ENCODE measurements at regions of chr17 and their contacts with region 1.

Region 1: DNA sequence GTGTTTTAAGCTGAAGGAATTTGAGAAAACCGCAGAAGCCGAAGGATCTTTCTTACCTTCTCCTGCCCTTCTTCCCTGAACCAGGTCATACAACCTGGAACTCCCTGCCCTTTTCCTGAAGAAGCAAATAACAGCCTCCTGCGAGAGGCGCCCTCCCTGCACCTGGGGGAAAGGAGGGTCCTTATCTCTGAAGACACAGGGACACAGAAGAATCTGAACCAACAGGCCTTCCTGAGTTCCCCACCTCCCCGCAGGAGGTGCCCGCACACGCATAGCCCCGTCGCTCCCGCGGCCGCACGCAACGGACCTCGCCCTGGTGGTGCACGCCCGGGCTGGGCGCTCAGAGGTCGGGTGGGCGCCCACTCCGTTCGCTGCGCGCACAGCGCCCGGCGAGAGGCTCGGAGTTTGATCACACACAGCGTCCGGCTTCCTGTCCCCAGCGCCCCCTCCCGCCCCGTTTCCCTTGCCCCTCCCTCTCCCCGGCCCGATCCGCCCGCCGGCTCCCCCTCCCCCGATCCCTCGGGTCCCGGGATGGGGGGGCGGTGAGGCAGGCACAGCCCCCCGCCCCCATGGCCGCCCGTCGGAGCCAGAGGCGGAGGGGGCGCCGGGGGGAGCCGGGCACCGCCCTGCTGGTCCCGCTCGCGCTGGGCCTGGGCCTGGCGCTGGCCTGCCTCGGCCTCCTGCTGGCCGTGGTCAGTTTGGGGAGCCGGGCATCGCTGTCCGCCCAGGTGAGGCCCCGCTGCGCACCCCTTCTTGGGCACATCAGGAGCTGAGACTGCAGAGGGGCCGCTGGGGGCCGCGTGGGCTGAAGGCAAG is at the start of gene TNFSF12:
- DNase-seq: peak; percentile 36 to 66 (median 59)
- H3K4me3 ChIP-seq: peak within 1 kb of the TSS; percentile 50 to 96 (median 79)
- H3K27ac ChIP-seq: peak within 1 kb of the TSS; percentile 62 to 98 (median 94)
- H3K27me3 ChIP-seq: no peaks in the 10 kb centered on the region
- CTCF ChIP-seq: peak in 18 of 56 donors; percentile 5 to 38 (median 16)
- total RNA-seq, gene TNFSF12: 25.3 to 97.2 (median 50.2) TPM

Region 2: DNA sequence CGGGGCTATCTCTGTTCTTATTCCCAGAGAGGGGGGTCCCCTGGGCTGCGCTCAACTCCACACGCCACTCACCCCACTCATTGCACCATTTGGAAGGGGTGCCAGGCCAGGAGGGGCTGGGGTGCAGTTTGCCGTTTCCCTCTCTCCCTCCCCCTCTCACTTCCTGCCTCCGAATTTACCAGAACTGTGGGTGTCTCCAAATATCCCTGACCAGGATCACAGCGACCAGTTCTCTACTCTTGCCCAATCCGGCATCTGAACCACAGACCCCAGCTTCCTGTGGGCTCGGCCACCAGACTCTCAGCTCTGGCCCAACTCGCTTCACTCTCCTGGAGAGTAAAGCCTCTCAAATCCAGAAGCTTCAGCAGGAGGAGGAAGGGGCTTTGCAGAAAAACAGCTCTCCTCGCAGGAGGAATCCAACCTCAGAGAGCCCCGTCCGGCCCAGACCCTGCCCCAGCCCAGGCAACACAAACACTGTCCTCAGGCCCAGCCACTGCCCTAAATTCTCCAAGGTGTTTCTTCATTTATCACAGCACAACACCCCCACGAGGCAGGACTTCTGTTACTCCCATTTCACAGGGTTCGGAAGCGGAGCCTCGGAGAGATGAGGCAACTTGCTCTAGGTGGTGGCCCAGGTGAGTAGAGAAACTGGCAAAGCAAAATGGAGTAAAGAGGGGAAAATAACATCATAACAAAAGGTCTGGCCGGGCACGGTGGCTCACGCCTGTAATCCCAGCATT is 433.7 kb before region 1 on chr17:
- intact Hi-C with region 1: no loop called
- DNase-seq: peak in 3 of 10 donors; percentile 31 to 44 (median 40)
- H3K4me3 ChIP-seq: no peak overlapping the region
- H3K27ac ChIP-seq: peak overlapping the region in 10 of 59 donors; percentile 4 to 65 (median 27)
- H3K27me3 ChIP-seq: peaks cover 0 to 6% (median 0%) of the 10 kb centered on the region in 45 donors
- CTCF ChIP-seq: no peak

Region 3: DNA sequence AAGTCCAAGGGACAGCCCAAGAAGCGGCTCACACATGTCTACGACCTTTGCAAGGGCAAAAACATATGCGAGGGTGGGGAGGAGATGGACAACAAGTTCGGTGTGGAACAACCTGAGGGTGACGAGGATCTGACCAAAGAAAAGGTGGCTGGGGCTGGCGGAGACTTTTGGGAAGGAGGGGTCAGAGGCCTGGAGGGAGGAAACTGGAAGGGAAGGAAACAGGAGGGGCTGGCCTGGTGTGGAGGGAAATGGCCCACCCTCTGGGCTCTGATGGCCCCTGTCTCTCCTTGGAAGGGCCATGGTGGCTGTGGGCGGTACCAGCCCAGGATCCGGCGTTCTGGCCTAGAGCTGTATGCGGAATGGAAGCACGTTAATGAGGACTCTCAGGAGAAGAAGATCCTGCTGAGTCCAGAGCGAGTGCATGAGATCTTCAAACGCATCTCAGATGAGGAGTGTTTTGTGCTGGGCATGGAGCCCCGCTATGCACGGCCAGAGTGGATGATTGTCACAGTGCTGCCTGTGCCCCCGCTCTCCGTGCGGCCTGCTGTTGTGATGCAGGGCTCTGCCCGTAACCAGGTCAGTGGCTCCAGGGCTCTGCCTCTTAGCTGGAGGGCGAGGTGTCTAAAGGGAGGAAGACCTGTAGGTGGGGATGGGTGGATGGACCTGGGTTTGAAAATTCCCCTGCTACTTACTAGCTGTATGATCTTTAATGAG is 52.2 kb before region 1 on chr17:
- intact Hi-C with region 1: loop called in 1 of 2 experiments (anchors 5 kb)
- DNase-seq: no peak
- H3K4me3 ChIP-seq: no peak overlapping the region
- H3K27ac ChIP-seq: no peak overlapping the region
- H3K27me3 ChIP-seq: no peaks in the 10 kb centered on the region
- CTCF ChIP-seq: no peak

Measured in dorsolateral prefrontal cortex (tissue), 120 donors.